H1 (cell line): ENCODE measurements at regions of chr6 and their contacts with region 1.

Region 1: GRCh38 chr6:106141441-106142237 is 55.5 kb downstream of the PRDM1 start:
- DNase-seq: no peak
- H3K4me3 ChIP-seq: no peak overlapping the region
- H3K27ac ChIP-seq: no peak overlapping the region
- H3K4me1 ChIP-seq: peaks cover 0 to 8% (median 7%) of the 10 kb centered on the region in 4 experiments; a peak in 4 of 7 replicates
- H3K27me3 ChIP-seq: peaks cover 0 to 1% (median 0%) of the 10 kb centered on the region in 4 experiments; a peak in 1 of 7 replicates
- CTCF ChIP-seq: no peak
- EP300 ChIP-seq: no peak
- POLR2A ChIP-seq: no peak
- RAD21 ChIP-seq: no peak

Region 2: DNA sequence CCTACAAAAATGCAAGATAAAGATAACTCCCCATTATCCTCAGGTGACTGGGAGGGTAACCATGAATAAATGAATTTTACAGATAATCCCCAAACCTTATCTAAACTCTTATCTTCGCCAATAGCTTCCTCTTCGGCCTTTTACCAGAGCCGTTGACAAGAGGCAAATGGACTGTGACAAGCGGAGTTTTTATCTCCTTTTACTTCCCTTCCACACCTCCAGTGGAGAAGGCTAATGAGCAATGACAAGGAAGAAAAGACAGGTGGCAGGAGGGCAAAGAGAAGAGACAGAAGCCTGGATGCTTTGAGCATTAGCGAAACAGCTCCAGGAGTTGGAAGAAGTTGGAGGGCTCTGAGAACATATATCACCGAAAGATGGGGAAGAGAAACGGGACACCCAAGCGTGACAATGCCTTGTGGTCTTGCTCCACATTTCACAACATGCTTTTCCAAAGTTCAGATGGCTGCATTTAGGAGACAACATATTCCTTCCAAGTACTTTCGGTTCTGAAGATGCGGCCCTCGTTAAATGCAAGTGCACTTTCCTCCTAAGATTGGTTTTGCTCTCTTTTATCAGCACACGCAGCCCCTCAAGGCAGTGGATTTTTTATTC is 13.7 kb after region 1 on chr6:
- CTCF ChIA-PET with region 1: interaction called, 38 read pairs
- POLR2A ChIA-PET with region 1: interaction called, 3 read pairs
- DNase-seq: no peak
- H3K4me3 ChIP-seq: no peak overlapping the region
- H3K27ac ChIP-seq: no peak overlapping the region
- H3K4me1 ChIP-seq: peaks cover 0 to 5% (median under 1%) of the 10 kb centered on the region in 4 experiments; a peak in 1 of 7 replicates
- H3K27me3 ChIP-seq: no peaks in the 10 kb centered on the region; a peak in 1 of 7 replicates
- CTCF ChIP-seq: peak in 1 of 3 experiments; percentile 32; a peak in 2 of 4 replicates
- EP300 ChIP-seq: no peak
- POLR2A ChIP-seq: no peak
- RAD21 ChIP-seq: peak; percentile 19 to 37; a peak in 3 of 4 replicates

Region 3: DNA sequence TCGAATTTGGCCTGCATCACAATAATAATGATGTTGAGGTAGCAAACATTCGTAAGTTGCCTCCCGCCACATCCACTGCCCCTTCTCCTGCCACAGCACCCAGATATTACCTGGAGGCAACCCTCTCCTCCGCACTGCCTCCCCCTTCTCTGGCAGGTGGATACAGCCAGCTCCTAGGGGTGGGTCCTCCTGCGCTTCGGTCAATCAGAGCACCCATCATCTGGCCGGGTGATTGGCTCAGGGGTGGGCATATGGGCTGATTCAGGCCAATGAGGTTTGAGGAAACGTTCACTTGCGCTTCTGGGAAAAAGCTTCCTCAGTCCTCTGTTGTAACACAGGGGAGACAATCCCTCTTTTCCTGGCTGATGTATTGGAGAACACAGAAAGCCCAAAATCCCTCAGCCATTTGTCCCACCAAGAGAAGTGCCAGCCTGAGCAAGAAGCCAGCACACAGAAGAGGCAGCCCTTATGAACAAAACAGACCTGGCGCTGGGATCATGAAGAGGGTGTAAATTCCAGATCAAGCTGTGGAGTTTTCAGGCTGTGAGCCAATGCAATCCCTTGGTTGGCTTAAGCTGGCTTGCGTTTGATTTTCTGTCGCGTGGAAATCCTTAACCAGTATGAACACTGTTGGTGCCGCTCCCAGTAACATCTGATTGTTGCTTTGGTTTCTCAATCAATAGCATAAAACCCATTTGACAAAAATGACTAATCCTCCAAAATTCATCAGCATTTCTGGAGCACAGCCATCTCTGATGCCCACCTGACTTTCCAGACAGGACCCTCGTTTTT is 26.7 kb after region 1 on chr6:
- CTCF ChIA-PET with region 1: interaction called, 11 read pairs
- POLR2A ChIA-PET with region 1: interaction called, 3 read pairs
- DNase-seq: no peak
- H3K4me3 ChIP-seq: no peak overlapping the region
- H3K27ac ChIP-seq: no peak overlapping the region
- H3K4me1 ChIP-seq: peaks cover 4 to 16% (median 9%) of the 10 kb centered on the region in 4 experiments
- H3K27me3 ChIP-seq: no peaks in the 10 kb centered on the region; a peak in 1 of 7 replicates
- CTCF ChIP-seq: no peak
- EP300 ChIP-seq: no peak
- POLR2A ChIP-seq: no peak
- RAD21 ChIP-seq: no peak

Region 4: DNA sequence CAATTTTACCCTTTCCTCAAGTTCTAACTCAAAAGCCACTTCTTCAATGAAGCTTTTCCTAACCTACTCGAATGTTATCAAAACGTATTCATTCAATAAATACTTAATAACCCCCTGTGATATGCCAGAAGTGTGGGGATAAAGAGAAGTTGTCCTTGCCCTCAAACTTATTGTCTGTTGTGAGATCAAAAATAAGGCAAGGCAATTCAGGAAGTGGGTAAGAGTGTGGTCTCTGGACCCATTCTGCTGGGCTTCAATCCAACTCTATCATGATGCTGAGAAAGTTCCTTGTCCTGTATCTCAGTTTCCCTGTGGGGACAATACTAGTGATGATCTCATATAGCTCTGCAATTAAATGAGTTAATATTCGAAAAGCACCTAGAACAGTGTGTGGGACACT is 37.3 kb after region 1 on chr6:
- CTCF ChIA-PET with region 1: interaction called, 11 read pairs
- POLR2A ChIA-PET with region 1: no interaction called
- DNase-seq: no peak
- H3K4me3 ChIP-seq: no peak overlapping the region
- H3K27ac ChIP-seq: no peak overlapping the region
- H3K4me1 ChIP-seq: no peaks in the 10 kb centered on the region; a peak in 1 of 7 replicates
- H3K27me3 ChIP-seq: no peaks in the 10 kb centered on the region
- CTCF ChIP-seq: no peak
- EP300 ChIP-seq: no peak
- POLR2A ChIP-seq: no peak
- RAD21 ChIP-seq: no peak